Mammary epithelial cell (primary cell): ENCODE measurements at regions of chr1 and their contacts with region 1.

Region 1: GRCh38 chr1:91885716-91886506 is at the start of gene TGFBR3:
- DNase-seq: peak; percentile 62
- H3K4me3 ChIP-seq: peak within 1 kb of the TSS; percentile 63 to 66 (median 64)
- H3K27ac ChIP-seq: no peak within 1 kb of the TSS
- H3K4me1 ChIP-seq: peaks cover 24% of the 10 kb centered on the region
- H3K27me3 ChIP-seq: peaks cover 24% of the 10 kb centered on the region
- CTCF ChIP-seq: peak; percentile 18 to 64
- total RNA-seq, gene TGFBR3: 0.61 to 0.67 TPM

Region 2: GRCh38 chr1:91529856-91530255 is 356.1 kb before region 1 on chr1:
- CTCF ChIA-PET with region 1: no interaction called
- dilution Hi-C with region 1: no loop called
- in situ Hi-C with region 1: no loop called
- intact Hi-C with region 1: loop called (anchors 1 kb)
- DNase-seq: peak; percentile 54
- H3K4me3 ChIP-seq: no peak overlapping the region
- H3K27ac ChIP-seq: no peak overlapping the region
- H3K4me1 ChIP-seq: peaks cover 9% of the 10 kb centered on the region
- H3K27me3 ChIP-seq: no peaks in the 10 kb centered on the region
- CTCF ChIP-seq: peak; percentile 56 to 71

Region 3: DNA sequence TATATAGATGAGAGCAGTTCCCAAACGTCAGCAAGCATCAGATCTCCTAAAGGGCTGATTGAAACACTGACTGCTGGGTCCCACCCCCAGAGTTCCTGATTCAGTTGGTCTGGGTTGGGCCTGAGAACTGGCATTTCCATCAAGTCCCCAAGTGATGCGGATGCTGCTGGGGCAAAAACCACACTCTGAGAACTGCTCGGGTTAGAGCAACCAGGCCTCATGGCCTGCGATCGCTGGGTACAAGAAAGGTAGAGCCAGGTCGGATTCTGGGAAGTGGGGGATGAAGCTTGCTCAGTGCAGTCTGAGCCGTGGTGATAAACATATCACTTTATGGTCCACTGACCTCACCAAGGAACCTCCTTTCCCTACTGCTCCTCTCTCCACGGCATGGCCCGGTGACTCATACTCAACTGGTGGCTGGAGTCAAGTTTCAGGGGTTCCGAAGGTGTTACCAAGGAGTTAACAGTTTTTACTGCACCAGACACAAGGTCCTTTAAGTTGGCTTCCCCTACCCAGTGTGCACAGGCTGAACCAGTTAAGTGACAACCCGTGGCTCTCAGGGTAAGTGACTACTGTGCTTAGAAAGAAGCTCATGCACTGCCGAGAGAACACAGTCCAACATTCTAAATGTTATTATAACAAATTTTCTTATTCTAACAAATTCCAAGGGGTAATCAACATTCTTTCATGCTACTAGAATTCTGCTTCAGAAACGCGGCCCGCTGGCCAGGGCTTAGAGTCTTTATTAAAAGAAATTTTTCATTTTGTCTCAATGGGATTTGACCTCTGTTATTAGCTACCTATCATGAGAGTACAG is 153.4 kb before region 1 on chr1:
- CTCF ChIA-PET with region 1: no interaction called
- dilution Hi-C with region 1: no loop called
- in situ Hi-C with region 1: no loop called
- intact Hi-C with region 1: loop called (anchors 5 kb)
- DNase-seq: peak; percentile 66
- H3K4me3 ChIP-seq: no peak overlapping the region
- H3K27ac ChIP-seq: no peak overlapping the region
- H3K4me1 ChIP-seq: peaks cover 30% of the 10 kb centered on the region
- H3K27me3 ChIP-seq: no peaks in the 10 kb centered on the region
- CTCF ChIP-seq: no peak

Region 4: DNA sequence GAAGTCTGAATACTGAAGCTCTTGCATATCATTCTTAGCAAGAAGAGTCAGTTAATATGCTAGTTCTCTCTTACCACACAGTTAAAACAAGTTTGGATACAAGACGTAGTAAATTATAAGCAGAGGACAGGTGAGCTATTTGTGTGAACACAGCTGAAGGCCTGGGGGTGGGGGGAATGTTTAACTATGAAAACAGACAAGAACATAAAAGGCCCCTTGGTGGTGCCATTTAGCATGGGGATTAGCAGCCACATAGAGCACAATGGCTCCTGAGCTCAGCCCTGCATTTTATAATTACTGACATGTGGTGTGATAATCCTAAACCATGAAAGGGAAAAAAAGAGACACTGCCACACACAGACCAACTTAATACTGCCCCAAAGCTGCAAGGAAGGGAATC is 94.8 kb before region 1 on chr1:
- CTCF ChIA-PET with region 1: no interaction called
- dilution Hi-C with region 1: no loop called
- in situ Hi-C with region 1: no loop called
- intact Hi-C with region 1: no loop called
- DNase-seq: no peak
- H3K4me3 ChIP-seq: no peak overlapping the region
- H3K27ac ChIP-seq: no peak overlapping the region
- H3K4me1 ChIP-seq: no peaks in the 10 kb centered on the region
- H3K27me3 ChIP-seq: peaks cover 43% of the 10 kb centered on the region
- CTCF ChIP-seq: peak in 1 of 2 donors; percentile 11

Region 5: GRCh38 chr1:91846007-91846617 is 39.8 kb before region 1 on chr1:
- CTCF ChIA-PET with region 1: no interaction called
- dilution Hi-C with region 1: no loop called
- in situ Hi-C with region 1: no loop called
- intact Hi-C with region 1: loop called (anchors 2 kb)
- DNase-seq: no peak
- H3K4me3 ChIP-seq: no peak overlapping the region
- H3K27ac ChIP-seq: no peak overlapping the region
- H3K4me1 ChIP-seq: peaks cover 19% of the 10 kb centered on the region
- H3K27me3 ChIP-seq: no peaks in the 10 kb centered on the region
- CTCF ChIP-seq: no peak

Region 6: DNA sequence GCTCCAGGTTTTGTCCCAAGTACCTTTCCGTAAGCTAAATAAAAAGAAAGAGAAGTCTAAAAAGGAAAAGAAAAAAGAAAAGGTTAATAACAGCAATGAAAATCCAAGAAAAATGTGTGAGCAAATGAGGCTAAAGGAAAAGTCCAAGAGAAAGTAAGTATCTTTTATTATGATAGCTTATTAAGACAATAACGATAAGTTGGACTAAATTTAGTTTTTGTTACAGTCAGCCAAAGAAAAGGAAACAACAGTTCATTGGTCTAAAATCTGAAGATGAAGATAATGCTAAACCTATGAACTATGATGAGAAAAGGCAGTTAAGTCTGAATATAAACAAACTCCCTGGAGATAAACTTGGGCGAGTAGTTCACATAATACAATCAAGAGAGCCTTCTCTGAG is 94.8 kb after region 1 on chr1:
- CTCF ChIA-PET with region 1: no interaction called
- dilution Hi-C with region 1: no loop called
- in situ Hi-C with region 1: no loop called
- intact Hi-C with region 1: no loop called
- DNase-seq: no peak
- H3K4me3 ChIP-seq: no peak overlapping the region
- H3K27ac ChIP-seq: no peak overlapping the region
- H3K4me1 ChIP-seq: no peaks in the 10 kb centered on the region
- H3K27me3 ChIP-seq: no peaks in the 10 kb centered on the region
- CTCF ChIP-seq: no peak

Region 7: GRCh38 chr1:92298573-92299476 is 412.9 kb after region 1 on chr1 and contains the starts of genes GLMN and RPAP2:
- CTCF ChIA-PET with region 1: no interaction called
- dilution Hi-C with region 1: no loop called
- in situ Hi-C with region 1: no loop called
- intact Hi-C with region 1: loop called (anchors 5 kb)
- DNase-seq: peak; percentile 86
- H3K4me3 ChIP-seq: peak within 1 kb of the TSS; percentile 66 to 99 (median 80)
- H3K27ac ChIP-seq: peak within 1 kb of the TSS; percentile 90
- H3K4me1 ChIP-seq: peaks cover 3% of the 10 kb centered on the region
- H3K27me3 ChIP-seq: no peaks in the 10 kb centered on the region
- CTCF ChIP-seq: peak in 1 of 2 donors; percentile 26
- total RNA-seq, gene GLMN: 9.3 to 11.9 TPM
- total RNA-seq, gene RPAP2: 10.7 to 30.2 TPM

Region 8: DNA sequence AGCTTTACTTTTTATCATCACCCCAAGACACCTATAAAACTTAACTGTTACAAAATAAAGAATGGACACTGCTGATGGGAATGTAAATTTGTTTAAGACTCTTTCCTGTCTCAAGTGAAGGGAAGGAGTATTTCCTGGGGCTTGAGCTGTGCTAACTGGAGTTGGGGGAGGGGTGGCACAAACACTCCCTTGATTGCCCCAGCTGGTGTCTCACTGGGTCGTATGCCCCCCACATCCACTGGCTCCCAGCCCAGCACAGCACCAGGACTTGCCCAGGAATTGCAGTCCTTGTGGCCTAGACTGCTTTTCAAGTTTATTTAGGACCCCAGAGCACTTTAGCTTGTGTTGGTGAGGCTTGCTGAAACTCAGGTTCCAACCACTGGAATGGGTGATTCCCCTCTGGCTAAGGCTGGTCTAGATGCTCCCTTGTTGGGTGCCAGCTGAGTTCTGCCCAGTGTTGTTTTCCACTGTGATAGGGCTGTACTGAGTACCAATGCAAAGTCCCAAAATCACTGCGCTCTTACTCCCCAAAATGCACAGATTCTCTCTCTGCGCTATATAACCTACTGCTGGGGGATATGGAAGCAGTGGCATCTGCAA is 1410.7 kb after region 1 on chr1:
- CTCF ChIA-PET with region 1: no interaction called
- dilution Hi-C with region 1: no loop called
- in situ Hi-C with region 1: no loop called
- intact Hi-C with region 1: no loop called
- DNase-seq: no peak
- H3K4me3 ChIP-seq: no peak overlapping the region
- H3K27ac ChIP-seq: no peak overlapping the region
- H3K4me1 ChIP-seq: no peaks in the 10 kb centered on the region
- H3K27me3 ChIP-seq: no peaks in the 10 kb centered on the region
- CTCF ChIP-seq: no peak